ENCODE measurements at regions of chr15 and their contacts with region 1.

Region 1: GRCh38 chr15:50134520-50135024 is 15.5 kb upstream of the ATP8B4 start:
- DNase-seq: no peak
- H3K4me3 Mint-ChIP-seq: peak overlapping the region; percentile 20
- H3K27ac Mint-ChIP-seq: peak overlapping the region; percentile 89
- H3K4me1 Mint-ChIP-seq: peaks cover 56% of the 10 kb centered on the region
- H3K27me3 Mint-ChIP-seq: no peaks in the 10 kb centered on the region

Region 2: DNA sequence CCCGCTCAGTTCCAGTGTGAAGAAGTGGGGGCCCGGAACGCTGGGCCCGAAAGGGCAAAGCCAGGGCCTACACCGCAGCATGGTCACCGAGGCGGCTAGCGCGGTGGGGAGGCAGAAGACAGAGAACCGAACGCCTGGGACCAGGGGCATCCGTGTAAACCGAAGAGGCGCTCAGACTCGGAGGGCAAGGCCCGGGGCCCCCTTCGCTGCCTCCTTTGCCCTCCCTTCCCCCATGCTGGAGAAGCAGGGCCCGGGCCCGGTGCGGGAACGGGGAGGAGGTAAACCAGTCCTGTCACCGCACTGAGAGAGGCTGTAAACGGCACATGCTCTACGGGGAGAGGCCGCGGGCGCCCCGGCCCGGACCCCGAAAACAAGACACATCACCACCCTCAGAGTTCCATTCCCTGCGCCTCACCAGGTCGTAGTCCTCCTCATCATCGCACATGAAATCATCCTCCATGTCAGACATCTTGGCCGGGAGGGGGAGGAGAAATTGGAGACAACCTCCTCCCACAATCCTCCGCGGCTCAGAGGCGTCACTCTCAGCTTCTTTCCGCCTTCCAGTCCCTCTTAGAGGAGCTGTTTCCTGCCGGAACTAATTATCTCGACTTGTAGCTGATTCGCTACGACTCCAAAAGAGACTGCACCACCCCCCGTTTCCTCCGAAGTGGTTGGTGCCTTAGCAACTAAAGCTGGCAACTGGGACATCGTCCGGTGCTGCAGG is 979.3 kb before region 1 on chr15 and contains the start of gene COPS2:
- intact Hi-C with region 1: loop called (anchors 5 kb)
- DNase-seq: peak; percentile 93
- H3K4me3 Mint-ChIP-seq: peak within 1 kb of the TSS; percentile 99
- H3K27ac Mint-ChIP-seq: peak within 1 kb of the TSS; percentile 99
- H3K4me1 Mint-ChIP-seq: peaks cover 47% of the 10 kb centered on the region
- H3K27me3 Mint-ChIP-seq: peaks cover 3% of the 10 kb centered on the region
- total RNA-seq, gene COPS2: 99.7 and 105 TPM in 2 replicates

Region 3: DNA sequence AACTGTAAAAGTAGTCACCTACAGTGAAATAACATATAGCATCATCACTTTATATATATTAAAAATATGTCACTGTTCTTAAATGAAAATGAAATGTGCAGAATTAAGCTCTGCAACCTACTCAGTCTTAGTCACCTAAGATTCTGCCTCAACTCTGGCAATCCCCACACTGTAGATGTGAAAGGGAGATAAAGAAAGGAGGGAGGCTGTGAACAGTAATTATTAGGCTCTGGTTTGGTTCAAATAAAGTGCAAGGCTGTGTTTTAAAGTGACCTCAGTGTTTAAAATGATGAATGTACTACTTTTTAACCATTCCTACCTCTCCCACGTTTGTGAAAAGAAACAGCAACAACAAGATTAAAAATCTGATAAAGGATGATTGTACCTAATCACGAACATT is 87.7 kb before region 1 on chr15:
- intact Hi-C with region 1: loop called (anchors 1 kb)
- DNase-seq: no peak
- H3K4me3 Mint-ChIP-seq: no peak overlapping the region
- H3K27ac Mint-ChIP-seq: peak overlapping the region; percentile 94
- H3K4me1 Mint-ChIP-seq: peaks cover 42% of the 10 kb centered on the region
- H3K27me3 Mint-ChIP-seq: no peaks in the 10 kb centered on the region

Region 4: GRCh38 chr15:50119063-50120040 is 15.2 kb before region 1 on chr15 and contains the start of gene ATP8B4:
- intact Hi-C with region 1: loop called (anchors 1 kb)
- DNase-seq: no peak
- H3K4me3 Mint-ChIP-seq: peak within 1 kb of the TSS; percentile 94
- H3K27ac Mint-ChIP-seq: peak within 1 kb of the TSS; percentile 95
- H3K4me1 Mint-ChIP-seq: peaks cover 65% of the 10 kb centered on the region
- H3K27me3 Mint-ChIP-seq: no peaks in the 10 kb centered on the region
- total RNA-seq, gene ATP8B4: 49.7 and 52.9 TPM in 2 replicates

Region 5: DNA sequence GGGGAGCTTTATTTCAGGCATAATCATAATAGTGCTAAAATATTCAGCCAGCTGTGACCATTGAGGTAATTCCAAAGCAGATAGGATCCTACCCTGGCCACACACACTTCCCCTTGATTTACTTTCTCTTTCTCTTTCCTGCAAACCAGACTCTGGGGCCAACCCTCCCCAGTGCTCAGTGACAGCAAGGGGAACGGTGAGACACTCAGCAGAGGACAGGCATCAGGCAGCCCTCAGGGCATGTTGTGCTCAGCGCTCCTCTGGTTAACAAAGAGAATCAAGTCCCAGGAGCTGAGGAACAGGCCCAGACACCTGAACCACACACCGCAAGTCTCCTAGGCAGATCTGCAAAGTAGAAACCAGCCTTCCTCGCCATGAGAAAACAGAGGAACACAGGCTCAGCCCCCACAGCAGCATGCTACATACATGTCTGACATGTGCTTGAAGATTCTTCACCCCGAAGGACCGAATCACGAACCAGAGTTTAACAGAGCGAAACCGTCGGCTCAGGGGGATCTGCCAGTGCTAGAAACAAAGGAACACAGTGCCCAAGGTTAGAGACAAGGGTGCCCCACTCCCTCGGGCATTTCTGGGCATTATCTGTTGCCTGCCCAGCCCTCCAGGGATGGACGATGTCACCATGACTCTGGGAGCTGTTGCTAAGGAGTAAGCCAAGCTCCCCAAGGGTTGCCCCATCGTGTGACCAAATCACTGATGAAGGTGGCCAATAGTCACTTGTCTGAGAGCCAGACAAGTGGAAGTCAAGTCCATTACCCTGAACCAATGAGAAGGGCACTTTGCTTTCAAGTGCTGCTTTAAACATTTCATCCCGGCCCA is 113.5 kb after region 1 on chr15:
- intact Hi-C with region 1: loop called (anchors 1 kb)
- DNase-seq: peak; percentile 59
- H3K4me3 Mint-ChIP-seq: peak overlapping the region; percentile 67
- H3K27ac Mint-ChIP-seq: peak overlapping the region; percentile 97
- H3K4me1 Mint-ChIP-seq: peaks cover 65% of the 10 kb centered on the region
- H3K27me3 Mint-ChIP-seq: no peaks in the 10 kb centered on the region

Region 6: GRCh38 chr15:50377867-50378751 is 243.5 kb after region 1 on chr15:
- intact Hi-C with region 1: loop called (anchors 1 kb)
- DNase-seq: no peak
- H3K4me3 Mint-ChIP-seq: peak overlapping the region; percentile 44
- H3K27ac Mint-ChIP-seq: peak overlapping the region; percentile 92
- H3K4me1 Mint-ChIP-seq: peaks cover 18% of the 10 kb centered on the region
- H3K27me3 Mint-ChIP-seq: no peaks in the 10 kb centered on the region

Measured in activated T-helper 1 cell treated with anti-CD3 and anti-CD28 coated beads, Interleukin-12 subunit alpha, Interleukin-12 subunit beta, Interleukin-2, Interleukin-4 antibody, amounts not matched to agents 30 ng/mL and 10 ng/mL and 1 ng/mL, durations not matched to agents 14 hours and 24 hours and 36 hours (primary cell).